ENCODE measurements at regions of chr12 and their contacts with region 1.

Region 1: DNA sequence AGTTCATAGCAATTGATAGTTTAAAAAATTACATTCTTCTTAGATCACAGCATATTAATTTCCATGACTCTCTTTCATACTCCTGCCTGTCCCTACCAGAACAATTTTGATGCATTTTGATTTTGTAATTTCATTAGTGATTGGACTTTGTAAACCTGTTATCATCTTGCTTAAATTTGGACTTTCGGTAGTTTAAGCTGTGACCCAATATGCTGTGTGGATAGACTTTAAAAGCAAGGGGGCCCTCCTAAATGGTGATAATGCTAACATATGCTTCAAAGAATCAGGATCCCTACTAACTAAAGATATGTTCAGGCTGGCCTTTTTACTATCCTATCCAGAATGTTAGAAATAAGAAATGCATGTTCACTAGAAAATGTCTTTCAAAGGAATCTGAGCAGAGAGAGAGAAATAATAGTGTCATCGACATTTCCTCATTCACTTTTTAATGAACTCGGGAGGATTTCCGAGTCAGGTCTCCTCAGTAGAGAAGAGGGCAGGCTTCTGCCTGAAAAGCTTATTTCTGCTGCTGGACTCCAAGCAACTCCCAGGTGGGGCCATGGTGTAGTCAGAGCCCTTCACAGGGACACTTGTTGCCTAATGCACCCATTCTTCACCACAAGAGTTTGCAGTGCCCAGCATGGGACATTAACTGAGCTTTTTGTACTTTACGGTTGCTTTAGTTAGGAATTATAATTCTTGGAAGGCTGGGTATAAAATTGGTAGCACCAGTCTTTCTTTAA is 16.7 kb downstream of the SLC38A4 start:
- DNase-seq: no peak
- H3K4me3 ChIP-seq: no peak overlapping the region
- H3K27ac ChIP-seq: no peak overlapping the region
- H3K4me1 ChIP-seq: no peaks in the 10 kb centered on the region
- H3K27me3 ChIP-seq: no peaks in the 10 kb centered on the region
- CTCF ChIP-seq: no peak

Region 2: DNA sequence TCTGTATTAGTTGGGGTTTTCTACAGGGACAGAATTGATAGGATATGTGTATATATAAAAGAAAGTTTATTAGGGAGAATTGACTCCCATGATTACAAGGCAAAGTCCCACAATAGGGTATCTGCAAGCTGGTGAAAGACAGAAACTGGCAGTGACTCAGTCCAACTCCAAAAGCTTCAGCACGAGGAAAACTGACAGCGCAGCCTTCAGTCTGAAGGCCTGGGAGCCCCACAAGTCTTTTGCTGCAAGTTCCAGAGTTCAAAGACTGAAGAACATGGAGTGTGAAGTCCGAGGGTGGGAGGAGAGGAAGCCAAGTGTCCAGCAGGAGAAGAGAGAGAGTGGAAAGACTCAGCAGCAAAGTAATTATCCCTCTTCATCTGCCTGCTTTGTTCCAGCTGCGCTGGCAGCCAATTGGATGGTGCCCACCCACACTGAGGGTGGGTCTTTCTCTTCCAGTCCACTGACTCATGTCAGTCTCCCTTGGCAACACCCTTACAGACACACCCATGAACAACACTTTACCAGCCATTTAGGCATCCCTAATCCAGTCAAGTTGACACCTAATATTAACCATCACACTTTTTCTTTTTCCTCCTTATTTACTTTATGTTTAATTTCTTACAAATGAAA is 708.2 kb before region 1 on chr12:
- CTCF ChIA-PET with region 1: no interaction called
- POLR2A ChIA-PET with region 1: interaction called, 11 read pairs
- intact Hi-C with region 1: no loop called
- DNase-seq: no peak
- H3K4me3 ChIP-seq: no peak overlapping the region
- H3K27ac ChIP-seq: no peak overlapping the region
- H3K4me1 ChIP-seq: no peaks in the 10 kb centered on the region
- H3K27me3 ChIP-seq: no peaks in the 10 kb centered on the region
- CTCF ChIP-seq: no peak

Region 3: GRCh38 chr12:46944088-46944487 is 135.0 kb after region 1 on chr12:
- CTCF ChIA-PET with region 1: no interaction called
- POLR2A ChIA-PET with region 1: no interaction called
- intact Hi-C with region 1: no loop called
- DNase-seq: no peak
- H3K4me3 ChIP-seq: no peak overlapping the region
- H3K27ac ChIP-seq: no peak overlapping the region
- H3K4me1 ChIP-seq: no peaks in the 10 kb centered on the region; the same call in 1 of the 2 replicates
- H3K27me3 ChIP-seq: no peaks in the 10 kb centered on the region
- CTCF ChIP-seq: no peak

Measured in PC-9 (cell line).